ENCODE measurements at regions of chr13 and their contacts with region 1.

Region 1: GRCh38 chr13:47774671-47774994 is 226.4 kb downstream of the SUCLA2 start:
- DNase-seq: no peak
- ATAC-seq: peak; percentile 18
- H3K4me3 ChIP-seq: no peak overlapping the region
- H3K27ac ChIP-seq: no peak overlapping the region
- H3K4me1 ChIP-seq: no peaks in the 10 kb centered on the region
- H3K27me3 ChIP-seq: no peaks in the 10 kb centered on the region
- CTCF ChIP-seq: no peak
- EP300 ChIP-seq: no peak
- POLR2A ChIP-seq: no peak
- RAD21 ChIP-seq: no peak

Region 2: GRCh38 chr13:46759846-46760245 is 1014.8 kb before region 1 on chr13:
- CTCF ChIA-PET with region 1: no interaction called
- POLR2A ChIA-PET with region 1: no interaction called
- RAD21 ChIA-PET with region 1: no interaction called
- SMC1A ChIA-PET with region 1: no interaction called
- in situ Hi-C with region 1: no loop called
- intact Hi-C with region 1: loop called (anchors 5 kb)
- DNase-seq: no peak
- ATAC-seq: no peak
- H3K4me3 ChIP-seq: no peak overlapping the region
- H3K27ac ChIP-seq: no peak overlapping the region
- H3K4me1 ChIP-seq: no peaks in the 10 kb centered on the region
- H3K27me3 ChIP-seq: no peaks in the 10 kb centered on the region
- CTCF ChIP-seq: no peak
- EP300 ChIP-seq: no peak
- POLR2A ChIP-seq: no peak
- RAD21 ChIP-seq: no peak

Region 3: DNA sequence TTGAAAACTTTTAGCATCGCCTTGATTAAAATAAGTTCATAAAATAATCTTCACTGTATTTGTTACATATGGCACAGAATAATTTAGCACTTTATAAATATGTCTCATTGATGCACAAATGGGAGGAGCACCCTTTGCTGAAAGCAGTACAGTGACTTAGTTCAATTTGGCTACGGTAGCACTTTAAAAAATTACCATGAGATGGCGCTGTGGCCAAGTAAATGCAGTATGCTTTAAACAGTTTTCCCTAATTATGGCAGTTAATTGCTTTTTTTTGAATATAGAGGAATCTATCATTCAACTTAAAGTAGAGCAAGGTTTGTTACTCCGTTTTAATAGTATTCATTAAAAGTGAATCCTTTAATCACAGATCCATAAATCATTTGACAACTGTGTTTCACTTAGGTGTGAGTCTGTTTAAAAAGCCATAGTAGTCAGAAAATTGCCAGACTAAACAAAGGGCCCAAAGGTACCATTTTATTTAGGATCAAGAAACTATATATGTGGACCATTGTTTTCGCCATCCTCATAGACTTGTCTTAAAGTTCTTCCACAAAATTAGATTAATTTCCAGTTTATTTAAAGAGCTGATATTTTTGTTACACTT is 942.9 kb before region 1 on chr13:
- CTCF ChIA-PET with region 1: interaction called, 7 read pairs
- POLR2A ChIA-PET with region 1: no interaction called
- RAD21 ChIA-PET with region 1: interaction called, 4 read pairs
- SMC1A ChIA-PET with region 1: interaction called, 4 read pairs
- in situ Hi-C with region 1: loop called (anchors 5 kb)
- intact Hi-C with region 1: loop called (anchors 1 kb)
- DNase-seq: no peak
- ATAC-seq: peak; percentile 78
- H3K4me3 ChIP-seq: no peak overlapping the region
- H3K27ac ChIP-seq: no peak overlapping the region
- H3K4me1 ChIP-seq: no peaks in the 10 kb centered on the region
- H3K27me3 ChIP-seq: no peaks in the 10 kb centered on the region
- CTCF ChIP-seq: peak; percentile 51 to 82 (median 72)
- EP300 ChIP-seq: no peak
- POLR2A ChIP-seq: no peak
- RAD21 ChIP-seq: peak; percentile 84

Region 4: DNA sequence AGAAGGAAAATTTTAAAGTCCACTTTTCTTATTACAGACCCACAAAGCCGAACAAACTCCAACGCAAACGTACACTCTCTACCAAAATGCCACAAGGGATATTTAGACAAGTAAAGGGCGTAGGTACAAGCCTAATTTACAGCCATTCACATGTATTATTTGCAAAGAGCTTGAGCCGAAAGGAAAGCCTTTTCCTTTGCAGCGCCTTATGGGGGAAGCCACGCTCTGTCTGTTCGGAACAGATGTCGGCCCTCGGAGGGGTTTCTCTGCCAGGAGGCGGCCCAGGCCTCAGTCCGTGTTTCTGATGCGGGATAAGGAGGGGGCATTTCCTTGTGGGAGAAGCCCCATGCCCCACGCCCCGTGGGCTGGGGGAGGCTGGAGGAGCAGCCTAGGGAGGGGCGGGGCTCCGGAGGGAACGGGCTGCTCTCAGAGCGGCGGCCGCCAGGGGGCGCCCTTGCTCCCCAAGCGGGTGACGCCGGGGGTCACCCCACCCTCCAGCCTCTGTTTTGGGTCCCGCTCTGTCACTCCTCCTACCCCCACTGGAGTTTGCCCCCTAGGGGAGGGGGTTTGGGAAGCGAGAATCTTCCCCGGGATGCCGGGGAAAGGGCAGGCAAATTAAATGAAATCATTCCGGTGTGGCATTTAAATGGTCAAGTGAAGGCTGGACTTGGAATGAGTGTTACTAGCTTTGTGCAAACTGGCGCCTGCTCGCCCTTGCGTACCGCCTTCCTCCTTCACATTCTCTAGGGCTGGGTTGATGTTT is 880.7 kb before region 1 on chr13:
- CTCF ChIA-PET with region 1: interaction called, 5 read pairs
- POLR2A ChIA-PET with region 1: no interaction called
- RAD21 ChIA-PET with region 1: no interaction called
- SMC1A ChIA-PET with region 1: interaction called, 3 read pairs
- in situ Hi-C with region 1: loop called (anchors 10 kb)
- intact Hi-C with region 1: loop called (anchors 2 kb)
- DNase-seq: peak; percentile 11
- ATAC-seq: peak; percentile 99
- H3K4me3 ChIP-seq: peak overlapping the region; percentile 70
- H3K27ac ChIP-seq: no peak overlapping the region
- H3K4me1 ChIP-seq: no peaks in the 10 kb centered on the region
- H3K27me3 ChIP-seq: peaks cover 4 to 6% of the 10 kb centered on the region in 2 experiments; a peak in 3 of 4 replicates
- CTCF ChIP-seq: peak; percentile 75 to 95 (median 76)
- EP300 ChIP-seq: no peak
- POLR2A ChIP-seq: no peak
- RAD21 ChIP-seq: peak; percentile 62

Region 5: DNA sequence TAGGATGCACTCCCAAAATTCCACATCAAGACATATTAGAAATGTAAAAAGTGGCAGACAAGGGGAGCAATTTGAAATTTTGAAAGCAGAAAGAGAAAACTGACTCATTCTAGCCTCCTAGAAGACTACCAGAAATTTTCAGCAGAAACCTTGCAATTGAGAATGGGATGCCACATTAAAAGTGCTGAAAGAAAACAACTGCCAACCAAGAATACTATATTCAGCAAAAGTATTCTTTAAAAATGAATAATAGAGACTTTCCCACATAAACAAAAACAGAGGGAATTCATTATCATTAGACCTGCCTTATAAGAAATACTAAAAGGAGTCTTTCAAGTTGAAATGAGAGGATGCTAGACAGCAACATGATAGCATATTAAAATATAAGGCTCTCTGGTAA is 799.5 kb before region 1 on chr13:
- CTCF ChIA-PET with region 1: interaction called, 20 read pairs
- POLR2A ChIA-PET with region 1: no interaction called
- RAD21 ChIA-PET with region 1: interaction called, 4 read pairs
- SMC1A ChIA-PET with region 1: no interaction called
- in situ Hi-C with region 1: no loop called
- intact Hi-C with region 1: loop called (anchors 10 kb)
- DNase-seq: no peak
- ATAC-seq: no peak
- H3K4me3 ChIP-seq: no peak overlapping the region
- H3K27ac ChIP-seq: no peak overlapping the region
- H3K4me1 ChIP-seq: no peaks in the 10 kb centered on the region; the same call in 1 of the 2 replicates
- H3K27me3 ChIP-seq: no peaks in the 10 kb centered on the region
- CTCF ChIP-seq: no peak
- EP300 ChIP-seq: no peak
- POLR2A ChIP-seq: no peak
- RAD21 ChIP-seq: no peak

Region 6: DNA sequence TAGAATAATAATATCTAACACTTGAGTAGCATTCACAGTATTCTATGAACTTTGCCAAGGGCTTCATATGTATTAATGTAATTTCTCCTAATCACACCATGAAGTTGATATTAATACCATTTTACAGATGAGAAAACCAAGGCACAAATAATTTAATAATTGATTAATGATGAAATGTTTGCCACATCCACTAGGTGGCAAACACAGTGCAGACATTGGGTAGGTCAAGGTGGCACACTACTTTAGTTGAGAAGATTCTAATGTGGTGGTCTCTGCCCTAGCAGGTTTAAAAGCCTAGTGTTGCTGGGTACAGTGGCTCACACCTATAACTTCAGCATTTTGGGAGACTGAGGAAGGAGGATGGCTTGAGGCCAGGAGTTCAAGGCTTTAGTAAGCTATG is 186.0 kb before region 1 on chr13:
- CTCF ChIA-PET with region 1: interaction called, 3 read pairs
- POLR2A ChIA-PET with region 1: no interaction called
- RAD21 ChIA-PET with region 1: no interaction called
- SMC1A ChIA-PET with region 1: no interaction called
- in situ Hi-C with region 1: no loop called
- intact Hi-C with region 1: loop called (anchors 2 kb)
- DNase-seq: no peak
- ATAC-seq: 0 out of 3 replicates have a peak, but pooled peaks have one; percentile 27
- H3K4me3 ChIP-seq: no peak overlapping the region
- H3K27ac ChIP-seq: no peak overlapping the region
- H3K4me1 ChIP-seq: no peaks in the 10 kb centered on the region
- H3K27me3 ChIP-seq: no peaks in the 10 kb centered on the region
- CTCF ChIP-seq: peak in 2 of 3 experiments; percentile 12 to 21; a peak in 1 of 6 replicates
- EP300 ChIP-seq: no peak
- POLR2A ChIP-seq: no peak
- RAD21 ChIP-seq: 0 out of 2 replicates have a peak, but pooled peaks have one; percentile 18

Region 7: GRCh38 chr13:47788844-47789243 is 14.2 kb after region 1 on chr13:
- CTCF ChIA-PET with region 1: no interaction called
- POLR2A ChIA-PET with region 1: no interaction called
- RAD21 ChIA-PET with region 1: no interaction called
- SMC1A ChIA-PET with region 1: no interaction called
- in situ Hi-C with region 1: no loop called
- intact Hi-C with region 1: no loop called
- DNase-seq: no peak
- ATAC-seq: no peak
- H3K4me3 ChIP-seq: no peak overlapping the region
- H3K27ac ChIP-seq: no peak overlapping the region
- H3K4me1 ChIP-seq: no peaks in the 10 kb centered on the region
- H3K27me3 ChIP-seq: no peaks in the 10 kb centered on the region
- CTCF ChIP-seq: no peak
- EP300 ChIP-seq: no peak
- POLR2A ChIP-seq: no peak
- RAD21 ChIP-seq: no peak

Measured in GM12878 (cell line).